ENCODE measurements at regions of chr1 and their contacts with region 1.

Region 1: GRCh38 chr1:246435421-246436041 is 71.5 kb downstream of the SMYD3 start:
- DNase-seq: no peak
- H3K4me3 ChIP-seq: no peak overlapping the region
- H3K27ac ChIP-seq: no peak overlapping the region
- H3K4me1 ChIP-seq: no peaks in the 10 kb centered on the region
- H3K27me3 ChIP-seq: no peaks in the 10 kb centered on the region
- CTCF ChIP-seq: no peak

Region 2: DNA sequence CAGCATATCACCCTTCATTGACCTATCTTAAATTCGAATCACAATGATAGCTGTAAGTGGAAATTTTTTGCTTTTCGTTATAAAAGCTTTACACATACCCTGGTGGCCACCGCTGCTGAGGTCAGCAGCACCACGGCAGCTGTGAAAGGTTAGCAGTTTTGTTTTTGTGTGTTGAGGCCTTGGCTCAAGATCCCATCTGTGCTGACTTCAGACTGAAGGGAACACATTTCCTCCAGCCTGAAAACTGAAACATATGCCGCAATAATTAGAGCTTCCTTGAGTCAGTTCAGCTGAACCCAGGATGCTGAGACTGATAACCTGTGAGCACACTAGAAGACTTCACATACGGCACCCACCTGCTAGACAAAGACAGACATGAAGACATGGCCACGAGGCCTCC is 31.5 kb before region 1 on chr1:
- intact Hi-C with region 1: loop called (anchors 2 kb)
- DNase-seq: no peak
- H3K4me3 ChIP-seq: no peak overlapping the region
- H3K27ac ChIP-seq: no peak overlapping the region
- H3K4me1 ChIP-seq: peaks cover 0 to 5% (median 0%) of the 10 kb centered on the region in 4 donors
- H3K27me3 ChIP-seq: no peaks in the 10 kb centered on the region
- CTCF ChIP-seq: no peak

Region 3: DNA sequence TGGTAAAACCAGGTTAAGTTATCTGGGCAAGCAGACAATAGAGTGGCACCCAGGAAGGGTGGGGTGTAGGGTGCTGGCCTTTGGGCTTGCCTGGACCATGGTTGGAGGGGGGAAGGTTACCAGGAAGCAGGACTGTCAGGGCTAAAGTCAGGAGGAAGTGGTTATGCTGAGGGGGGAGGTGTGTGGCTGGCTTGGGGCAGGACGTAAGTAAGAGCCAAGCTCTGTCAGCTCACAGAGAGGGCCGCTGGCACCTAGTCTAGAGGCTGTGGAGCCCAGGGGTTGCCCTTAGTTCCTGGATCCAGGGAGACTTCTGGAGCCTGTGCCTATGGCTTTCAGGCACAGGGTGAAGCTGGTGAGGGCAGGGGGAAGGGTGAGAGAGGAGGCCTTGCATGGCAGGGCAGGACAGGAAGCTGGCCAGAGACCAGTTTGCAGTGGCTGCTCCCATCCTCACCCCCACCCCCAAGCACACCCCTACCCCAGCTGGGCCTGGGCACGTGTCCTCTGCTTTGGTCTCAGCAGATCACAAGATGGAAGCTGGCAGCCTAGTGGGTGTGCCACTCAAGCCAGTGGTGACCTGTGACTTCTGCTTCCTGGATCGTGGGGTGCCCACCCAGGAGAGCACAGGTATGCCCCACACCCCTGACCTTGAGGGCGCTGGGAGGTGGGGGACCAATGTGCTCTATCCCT is 92.0 kb after region 1 on chr1:
- intact Hi-C with region 1: no loop called
- DNase-seq: no peak
- H3K4me3 ChIP-seq: no peak overlapping the region
- H3K27ac ChIP-seq: no peak overlapping the region
- H3K4me1 ChIP-seq: no peaks in the 10 kb centered on the region
- H3K27me3 ChIP-seq: no peaks in the 10 kb centered on the region
- CTCF ChIP-seq: no peak

Measured in tibial artery (tissue), 4 donors.